MCF 10A (cell line): ENCODE measurements at regions of chr9 and their contacts with region 1.

Region 1: DNA sequence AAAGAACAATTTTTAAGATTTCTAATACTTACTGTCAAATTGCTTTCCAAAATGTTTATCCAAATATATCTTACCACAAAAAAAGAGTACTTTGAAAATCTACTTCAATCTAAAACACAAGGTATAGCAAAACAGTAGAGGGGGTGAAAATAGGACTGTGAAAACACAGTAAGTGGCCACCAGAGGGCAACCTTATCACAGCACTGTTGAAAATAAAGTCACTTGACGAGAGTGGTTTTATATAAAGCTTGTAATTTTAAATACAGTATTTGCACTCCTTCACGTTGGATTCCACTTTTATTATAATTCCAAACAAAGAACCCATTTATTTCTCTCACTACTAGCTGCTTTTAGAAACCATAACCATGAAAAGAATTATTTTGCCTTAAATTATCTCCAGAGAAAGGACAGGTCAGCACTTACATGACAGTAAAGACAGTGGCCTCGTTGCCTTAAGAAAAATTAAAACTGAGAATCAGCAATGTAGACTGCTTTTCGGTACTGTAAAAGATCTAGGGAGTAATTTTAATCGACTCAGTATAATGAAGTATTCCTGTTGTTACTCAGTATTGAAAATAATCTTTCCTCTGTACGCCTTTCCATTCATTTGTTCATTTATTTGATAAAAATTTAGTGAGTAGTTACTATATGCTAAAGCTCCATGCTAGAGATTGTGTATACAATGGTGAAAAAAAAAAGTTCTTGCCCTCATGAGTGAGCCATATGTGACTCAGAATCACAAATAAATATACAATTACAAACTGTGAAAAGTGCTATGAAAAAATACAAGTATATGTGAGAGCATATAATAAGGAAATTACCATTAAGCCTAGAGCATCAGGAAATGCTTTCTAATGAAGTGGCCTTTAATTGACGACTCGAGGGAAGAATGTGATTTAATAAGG is 40.0 kb upstream of the CDK5RAP2 start:
- DNase-seq: peak; percentile 71
- H3K4me3 Mint-ChIP-seq: no peak overlapping the region
- H3K27ac Mint-ChIP-seq: peak overlapping the region; percentile 7
- H3K4me1 Mint-ChIP-seq: peaks cover 25% of the 10 kb centered on the region
- H3K27me3 Mint-ChIP-seq: no peaks in the 10 kb centered on the region
- CTCF ChIP-seq: peak; percentile 72

Region 2: GRCh38 chr9:120714088-120714845 is 94.3 kb after region 1 on chr9 and contains the start of gene MEGF9:
- CTCF ChIA-PET with region 1: interaction called, 4 read pairs
- POLR2A ChIA-PET with region 1: interaction called, 22 read pairs
- intact Hi-C with region 1: loop called (anchors 1 kb)
- DNase-seq: peak; percentile 98
- H3K4me3 Mint-ChIP-seq: peak within 1 kb of the TSS; percentile 91
- H3K27ac Mint-ChIP-seq: peak within 1 kb of the TSS; percentile 95
- H3K4me1 Mint-ChIP-seq: peaks cover 20% of the 10 kb centered on the region
- H3K27me3 Mint-ChIP-seq: no peaks in the 10 kb centered on the region
- CTCF ChIP-seq: no peak
- total RNA-seq, gene MEGF9: 5.7 and 6.9 TPM in 2 replicates

Region 3: GRCh38 chr9:120742951-120743416 is 123.0 kb after region 1 on chr9:
- CTCF ChIA-PET with region 1: interaction called, 8 read pairs
- POLR2A ChIA-PET with region 1: no interaction called
- intact Hi-C with region 1: loop called (anchors 5 kb)
- DNase-seq: peak; percentile 60
- H3K4me3 Mint-ChIP-seq: no peak overlapping the region
- H3K27ac Mint-ChIP-seq: no peak overlapping the region
- H3K4me1 Mint-ChIP-seq: no peaks in the 10 kb centered on the region
- H3K27me3 Mint-ChIP-seq: no peaks in the 10 kb centered on the region
- CTCF ChIP-seq: peak; percentile 70

Region 4: DNA sequence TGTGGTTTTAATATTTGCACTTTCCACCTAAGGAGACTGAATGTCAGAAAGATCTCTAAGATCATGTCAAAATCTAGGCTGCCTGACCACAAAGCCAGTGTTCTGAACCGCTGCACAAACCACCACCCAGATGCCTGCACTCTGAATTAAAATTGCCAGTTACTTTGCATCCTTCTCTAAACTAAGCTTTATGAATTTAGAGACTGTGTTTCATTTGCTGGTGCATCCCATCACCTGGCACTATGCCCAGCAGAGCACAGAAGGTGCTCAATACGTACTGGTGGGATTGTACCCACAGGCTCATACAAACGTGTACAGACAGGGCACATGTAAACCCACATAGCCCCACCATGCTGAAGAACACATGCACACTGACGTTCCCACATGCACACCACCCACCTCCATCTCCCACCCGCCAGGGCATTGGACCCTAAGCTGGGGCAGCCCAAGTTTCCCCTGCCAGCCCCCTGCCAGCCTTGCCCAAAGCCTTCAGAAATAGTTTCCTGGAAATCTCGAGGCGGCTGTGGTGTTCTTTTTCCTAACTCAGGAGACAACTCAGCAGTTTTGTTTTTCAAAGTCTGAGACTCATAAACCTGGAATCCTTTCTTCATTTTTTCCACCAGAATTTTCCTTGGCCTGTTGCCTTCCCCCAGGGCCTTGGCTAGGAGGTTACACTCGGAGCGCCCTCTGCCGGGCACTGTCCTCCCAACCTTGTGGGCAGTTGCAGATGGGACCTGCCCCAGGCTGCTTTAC is 316.2 kb after region 1 on chr9:
- CTCF ChIA-PET with region 1: interaction called, 3 read pairs
- POLR2A ChIA-PET with region 1: interaction called, 5 read pairs
- intact Hi-C with region 1: loop called (anchors 5 kb)
- DNase-seq: peak; percentile 96
- H3K4me3 Mint-ChIP-seq: peak overlapping the region; percentile 67
- H3K27ac Mint-ChIP-seq: peak overlapping the region; percentile 81
- H3K4me1 Mint-ChIP-seq: peaks cover 39% of the 10 kb centered on the region
- H3K27me3 Mint-ChIP-seq: no peaks in the 10 kb centered on the region
- CTCF ChIP-seq: peak; percentile 73